PC-9 (cell line): ENCODE measurements at regions of chr20 and their contacts with region 1.

Region 1: GRCh38 chr20:53869466-53870258 is 200.7 kb downstream of the BCAS1 start:
- DNase-seq: peak; percentile 64 to 76
- H3K4me3 ChIP-seq: no peak overlapping the region
- H3K27ac ChIP-seq: peak overlapping the region; percentile 77
- H3K4me1 ChIP-seq: peaks cover 68% of the 10 kb centered on the region
- H3K27me3 ChIP-seq: no peaks in the 10 kb centered on the region
- CTCF ChIP-seq: peak; percentile 90

Region 2: DNA sequence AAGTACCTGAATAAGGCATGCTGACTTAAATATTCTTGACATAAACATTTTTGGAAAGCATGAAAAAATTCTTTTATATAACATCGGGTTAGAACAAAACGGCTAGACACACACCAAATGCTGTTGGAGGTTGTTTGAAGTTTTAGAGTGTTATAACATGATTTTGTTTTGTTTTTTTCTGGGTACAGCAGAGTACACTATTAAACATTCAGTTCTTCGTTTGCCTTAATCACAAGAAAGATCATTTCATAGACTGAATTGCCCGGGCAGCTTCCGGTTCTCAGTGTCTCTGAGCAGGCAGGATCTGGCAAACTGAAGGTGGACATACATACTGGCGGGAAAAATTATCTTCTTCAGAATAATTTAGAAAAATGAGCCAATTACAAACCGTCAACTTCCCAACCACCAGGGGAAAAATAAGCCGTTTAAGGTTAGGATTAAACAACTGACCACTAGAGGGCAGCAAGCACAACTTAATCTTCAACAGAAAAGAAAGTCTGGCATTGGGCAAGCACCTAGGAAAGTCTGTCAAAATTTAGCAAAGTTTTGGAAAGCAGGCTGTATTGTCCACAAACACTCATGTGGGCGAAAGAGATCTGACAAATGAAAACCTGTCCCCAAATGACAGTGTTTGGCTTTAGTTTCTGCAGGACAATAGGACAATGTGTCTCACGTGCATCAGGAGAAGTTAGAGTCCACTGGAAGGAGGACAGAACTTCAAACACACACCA is 291.0 kb before region 1 on chr20:
- CTCF ChIA-PET with region 1: no interaction called
- POLR2A ChIA-PET with region 1: no interaction called
- intact Hi-C with region 1: loop called (anchors 1 kb)
- DNase-seq: peak; percentile 61 to 77
- H3K4me3 ChIP-seq: peak overlapping the region; percentile 49
- H3K27ac ChIP-seq: peak overlapping the region; percentile 91
- H3K4me1 ChIP-seq: peaks cover 64% of the 10 kb centered on the region
- H3K27me3 ChIP-seq: no peaks in the 10 kb centered on the region
- CTCF ChIP-seq: peak; percentile 96

Region 3: DNA sequence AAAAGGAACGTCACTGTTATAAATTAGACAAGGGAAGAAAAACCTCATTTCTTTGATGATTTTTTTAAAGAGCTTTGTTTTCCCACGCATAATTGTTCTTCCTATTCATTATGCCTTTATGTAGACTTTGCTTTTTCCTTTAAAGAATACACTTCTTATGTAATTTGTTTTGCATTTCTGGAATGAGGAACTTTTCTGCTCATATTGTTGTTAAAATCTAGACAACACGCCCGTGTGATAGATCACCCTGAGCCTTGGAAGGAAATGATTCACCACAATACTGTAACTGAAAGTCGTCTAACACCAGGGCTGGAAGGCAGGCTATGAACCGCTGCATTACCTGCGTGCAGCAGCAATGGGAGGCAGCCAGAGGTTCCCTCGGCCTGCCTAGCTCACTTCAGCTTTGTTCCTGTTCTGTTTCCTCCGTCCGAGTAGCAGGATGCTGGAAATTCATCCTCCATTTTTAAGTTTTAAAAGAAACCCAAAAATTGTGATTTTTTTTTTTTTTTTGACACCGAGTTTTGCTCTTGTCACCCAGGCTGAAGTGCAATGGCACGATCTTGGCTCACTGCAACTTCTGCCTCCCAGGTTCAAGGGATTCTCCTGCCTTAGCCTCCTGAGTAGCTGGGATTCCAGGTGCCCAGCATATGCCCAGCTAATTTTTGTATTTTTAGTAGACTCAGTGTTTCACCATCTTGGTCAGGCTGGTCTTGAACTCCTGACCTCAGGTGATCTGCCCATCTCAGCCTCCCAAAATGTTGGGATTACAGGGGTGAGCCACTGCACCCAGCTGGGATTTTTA is 226.4 kb before region 1 on chr20:
- CTCF ChIA-PET with region 1: no interaction called
- POLR2A ChIA-PET with region 1: interaction called, 11 read pairs
- intact Hi-C with region 1: no loop called
- DNase-seq: peak; percentile 73 to 98
- H3K4me3 ChIP-seq: peak overlapping the region; percentile 26
- H3K27ac ChIP-seq: peak overlapping the region; percentile 94
- H3K4me1 ChIP-seq: peaks cover 39% of the 10 kb centered on the region
- H3K27me3 ChIP-seq: no peaks in the 10 kb centered on the region
- CTCF ChIP-seq: no peak; the same call in 1 of the 2 replicates

Region 4: DNA sequence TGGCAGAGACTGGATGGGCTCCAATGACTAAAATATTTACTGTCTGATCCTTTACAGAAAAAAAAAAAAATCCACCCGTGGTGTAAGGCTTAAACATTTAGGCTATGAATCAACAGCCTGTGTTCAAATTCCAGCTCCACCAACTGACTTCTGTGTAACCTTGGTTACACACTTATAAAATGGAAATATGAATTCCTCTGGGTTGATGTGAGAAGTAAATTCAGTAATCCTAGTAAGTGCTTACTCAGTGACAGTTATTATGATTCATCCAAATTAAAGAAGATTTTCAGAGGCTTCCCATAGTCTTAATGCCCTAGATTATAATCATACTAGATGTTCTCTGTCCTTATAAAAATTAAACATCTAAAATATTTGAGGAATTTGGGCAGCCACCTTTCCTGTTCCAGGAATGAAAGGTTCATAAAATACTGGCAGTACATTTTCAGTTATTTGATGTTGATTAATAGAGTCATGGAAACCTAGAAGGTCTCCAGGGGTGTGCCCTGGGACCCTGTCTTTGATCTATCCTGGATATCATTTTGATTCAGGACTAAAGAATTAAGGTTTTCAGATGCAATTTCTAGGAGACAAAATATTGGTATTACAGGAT is 95.8 kb before region 1 on chr20:
- CTCF ChIA-PET with region 1: interaction called, 18 read pairs
- POLR2A ChIA-PET with region 1: interaction called, 3 read pairs
- intact Hi-C with region 1: loop called (anchors 1 kb)
- DNase-seq: peak; percentile 37 to 99
- H3K4me3 ChIP-seq: no peak overlapping the region
- H3K27ac ChIP-seq: peak overlapping the region; percentile 93
- H3K4me1 ChIP-seq: peaks cover 41% of the 10 kb centered on the region
- H3K27me3 ChIP-seq: no peaks in the 10 kb centered on the region
- CTCF ChIP-seq: no peak

Region 5: DNA sequence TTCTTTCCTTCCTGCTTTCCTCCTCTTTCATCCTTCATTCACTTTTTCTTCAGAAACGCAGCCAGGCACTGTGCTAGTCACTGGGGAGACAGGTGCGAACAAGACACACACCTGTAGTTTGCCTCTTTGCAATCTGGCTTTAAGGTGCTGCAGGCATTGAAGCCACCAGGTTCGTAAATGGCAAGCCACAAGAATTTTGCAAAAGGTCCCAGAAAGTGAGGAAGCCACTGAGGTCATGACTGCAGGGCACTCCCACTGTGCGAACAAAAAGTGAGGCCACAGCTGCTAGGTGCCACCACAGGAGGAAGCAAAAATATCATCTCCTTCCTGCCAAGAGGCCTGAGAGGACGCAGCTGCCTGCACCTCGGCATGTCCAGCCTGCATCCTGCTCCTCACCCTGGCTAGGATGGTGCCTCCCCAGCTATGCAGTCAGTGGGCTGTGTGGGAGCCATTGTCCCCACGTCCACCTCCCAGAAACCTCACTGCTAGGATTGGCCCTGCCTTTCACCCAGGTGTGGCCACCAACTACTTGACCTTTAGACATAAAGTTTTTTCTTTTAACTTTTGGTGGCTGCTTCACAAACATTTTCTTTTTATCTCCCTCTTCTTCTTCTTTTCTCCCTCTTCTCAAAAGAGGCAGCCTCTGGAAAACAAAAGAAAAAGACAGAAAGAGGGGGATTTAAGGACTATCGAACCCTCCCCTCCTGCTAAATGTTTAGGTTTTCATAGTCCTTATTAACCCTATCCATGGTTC is 30.1 kb before region 1 on chr20:
- CTCF ChIA-PET with region 1: interaction called, 5 read pairs
- POLR2A ChIA-PET with region 1: interaction called, 7 read pairs
- intact Hi-C with region 1: loop called (anchors 1 kb)
- DNase-seq: peak; percentile 75 to 93
- H3K4me3 ChIP-seq: no peak overlapping the region
- H3K27ac ChIP-seq: peak overlapping the region; percentile 71
- H3K4me1 ChIP-seq: peaks cover 33% of the 10 kb centered on the region
- H3K27me3 ChIP-seq: no peaks in the 10 kb centered on the region
- CTCF ChIP-seq: no peak

Region 6: DNA sequence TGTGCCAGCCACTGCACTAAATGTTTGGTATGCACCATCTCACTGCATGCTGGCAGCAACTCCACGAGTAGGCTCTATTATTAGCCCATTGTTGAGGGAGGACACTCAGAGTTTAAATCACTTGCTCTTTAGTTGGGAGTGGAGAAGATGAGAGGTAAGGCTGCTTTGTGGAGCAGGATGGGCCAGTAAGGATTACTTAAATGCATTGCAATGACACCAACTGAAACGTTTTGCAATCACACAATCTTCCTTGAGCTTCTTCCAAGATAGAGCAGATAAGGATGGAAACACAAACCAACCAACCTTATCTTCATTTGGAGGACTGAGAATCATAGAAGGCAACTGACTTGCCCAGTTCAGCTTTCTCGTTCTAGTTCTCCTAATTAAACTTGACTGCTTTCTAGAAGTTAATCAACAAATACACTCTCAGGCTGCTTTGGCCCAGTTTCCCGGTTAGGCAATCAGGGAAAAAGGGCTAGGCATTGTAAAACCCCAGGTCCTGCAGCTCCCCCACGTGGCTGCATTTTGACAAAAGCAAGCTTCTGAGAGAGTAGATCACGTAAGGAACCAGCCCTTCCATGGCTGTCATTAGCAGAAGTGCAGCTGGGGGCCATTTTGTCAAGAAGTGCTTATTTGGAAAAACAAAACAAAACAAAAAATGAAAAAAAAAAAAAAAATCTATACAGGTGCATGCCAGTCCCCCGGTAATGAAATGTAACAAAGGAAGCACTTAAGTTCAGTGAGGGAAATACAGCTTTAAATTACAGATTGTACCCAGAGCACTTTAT is 70.1 kb after region 1 on chr20:
- CTCF ChIA-PET with region 1: interaction called, 12 read pairs
- POLR2A ChIA-PET with region 1: no interaction called
- intact Hi-C with region 1: loop called (anchors 2 kb)
- DNase-seq: peak; percentile 89 to 90
- H3K4me3 ChIP-seq: no peak overlapping the region
- H3K27ac ChIP-seq: peak overlapping the region; percentile 65
- H3K4me1 ChIP-seq: peaks cover 26% of the 10 kb centered on the region
- H3K27me3 ChIP-seq: no peaks in the 10 kb centered on the region
- CTCF ChIP-seq: peak; percentile 96